Activated CD8-positive, alpha-beta T cell treated with anti-CD3 and anti-CD28 coated beads for 36 hours (primary cell): ENCODE measurements at regions of chr15 and their contacts with region 1.

Region 1: GRCh38 chr15:29560896-29561295 is 261.4 kb downstream of the TJP1 start:
- DNase-seq: no peak
- ATAC-seq: no peak
- H3K4me3 Mint-ChIP-seq: no peak overlapping the region
- H3K27ac Mint-ChIP-seq: no peak overlapping the region
- H3K4me1 Mint-ChIP-seq: no peaks in the 10 kb centered on the region
- H3K27me3 Mint-ChIP-seq: peaks cover 14% of the 10 kb centered on the region
- CTCF ChIP-seq: no peak

Region 2: GRCh38 chr15:29543009-29543408 is 17.9 kb before region 1 on chr15:
- CTCF ChIA-PET with region 1: no interaction called
- POLR2A ChIA-PET with region 1: no interaction called
- intact Hi-C with region 1: loop called (anchors 1 kb)
- DNase-seq: no peak
- ATAC-seq: no peak
- H3K4me3 Mint-ChIP-seq: no peak overlapping the region
- H3K27ac Mint-ChIP-seq: no peak overlapping the region
- H3K4me1 Mint-ChIP-seq: no peaks in the 10 kb centered on the region
- H3K27me3 Mint-ChIP-seq: peaks cover 4% of the 10 kb centered on the region
- CTCF ChIP-seq: no peak